ENCODE measurements at regions of chr3 and their contacts with region 1.

Region 1: GRCh38 chr3:69324362-69325025 is 61.4 kb downstream of the FRMD4B start:
- DNase-seq: no peak
- H3K4me3 Mint-ChIP-seq: no peak overlapping the region
- H3K27ac Mint-ChIP-seq: peak overlapping the region; percentile 85
- H3K4me1 Mint-ChIP-seq: peaks cover 56% of the 10 kb centered on the region
- H3K27me3 Mint-ChIP-seq: peaks cover 1% of the 10 kb centered on the region

Region 2: GRCh38 chr3:67349551-67350174 is 1974.8 kb before region 1 on chr3:
- intact Hi-C with region 1: loop called (anchors 2 kb)
- DNase-seq: no peak
- H3K4me3 Mint-ChIP-seq: no peak overlapping the region
- H3K27ac Mint-ChIP-seq: peak overlapping the region; percentile 3
- H3K4me1 Mint-ChIP-seq: peaks cover 14% of the 10 kb centered on the region
- H3K27me3 Mint-ChIP-seq: peaks cover 3% of the 10 kb centered on the region

Region 3: DNA sequence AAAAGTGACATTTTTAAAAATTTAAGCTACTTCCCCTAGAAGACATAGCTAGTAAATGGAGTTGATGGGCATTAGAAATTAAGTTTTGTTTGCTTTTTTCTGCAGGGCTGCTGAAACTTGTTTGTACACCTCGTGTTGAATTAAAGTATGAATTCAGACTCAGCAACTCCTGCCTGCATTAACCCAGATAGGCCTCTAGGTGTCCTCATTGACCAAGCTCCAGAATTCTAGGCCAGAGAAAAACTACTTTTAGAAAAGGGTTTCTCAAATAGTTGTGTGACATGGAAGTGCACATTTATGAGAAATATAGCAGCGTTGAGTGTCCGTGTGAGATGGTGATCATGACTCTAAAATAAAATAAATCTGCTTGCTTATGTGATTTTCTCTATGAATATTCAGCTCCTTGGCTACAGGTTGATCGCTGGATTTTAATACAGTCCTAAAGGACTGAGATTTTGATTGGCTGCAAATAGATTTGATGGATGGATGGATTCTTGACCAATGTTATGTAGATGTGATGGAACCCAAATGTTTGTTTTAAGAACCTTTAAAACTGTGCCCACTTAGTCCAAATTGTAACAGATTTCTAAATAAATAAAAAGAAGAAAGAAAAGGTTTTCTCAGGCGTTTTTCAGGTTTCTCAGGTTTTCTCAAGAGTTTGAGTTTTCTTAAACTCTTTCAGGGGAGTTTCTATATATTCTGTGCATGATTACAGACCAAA is 162.7 kb before region 1 on chr3:
- intact Hi-C with region 1: loop called (anchors 1 kb)
- DNase-seq: peak; percentile 34
- H3K4me3 Mint-ChIP-seq: no peak overlapping the region
- H3K27ac Mint-ChIP-seq: peak overlapping the region; percentile 6
- H3K4me1 Mint-ChIP-seq: peaks cover 8% of the 10 kb centered on the region
- H3K27me3 Mint-ChIP-seq: peaks cover 2% of the 10 kb centered on the region

Region 4: GRCh38 chr3:69306239-69307185 is 18.0 kb before region 1 on chr3:
- intact Hi-C with region 1: loop called (anchors 1 kb)
- DNase-seq: peak; percentile 60
- H3K4me3 Mint-ChIP-seq: peak overlapping the region; percentile 55
- H3K27ac Mint-ChIP-seq: peak overlapping the region; percentile 58
- H3K4me1 Mint-ChIP-seq: peaks cover 30% of the 10 kb centered on the region
- H3K27me3 Mint-ChIP-seq: no peaks in the 10 kb centered on the region

Region 5: GRCh38 chr3:69410250-69410649 is 85.8 kb after region 1 on chr3:
- intact Hi-C with region 1: loop called (anchors 1 kb)
- DNase-seq: peak; percentile 57
- H3K4me3 Mint-ChIP-seq: no peak overlapping the region
- H3K27ac Mint-ChIP-seq: no peak overlapping the region
- H3K4me1 Mint-ChIP-seq: peaks cover 11% of the 10 kb centered on the region
- H3K27me3 Mint-ChIP-seq: peaks cover 9% of the 10 kb centered on the region

Region 6: DNA sequence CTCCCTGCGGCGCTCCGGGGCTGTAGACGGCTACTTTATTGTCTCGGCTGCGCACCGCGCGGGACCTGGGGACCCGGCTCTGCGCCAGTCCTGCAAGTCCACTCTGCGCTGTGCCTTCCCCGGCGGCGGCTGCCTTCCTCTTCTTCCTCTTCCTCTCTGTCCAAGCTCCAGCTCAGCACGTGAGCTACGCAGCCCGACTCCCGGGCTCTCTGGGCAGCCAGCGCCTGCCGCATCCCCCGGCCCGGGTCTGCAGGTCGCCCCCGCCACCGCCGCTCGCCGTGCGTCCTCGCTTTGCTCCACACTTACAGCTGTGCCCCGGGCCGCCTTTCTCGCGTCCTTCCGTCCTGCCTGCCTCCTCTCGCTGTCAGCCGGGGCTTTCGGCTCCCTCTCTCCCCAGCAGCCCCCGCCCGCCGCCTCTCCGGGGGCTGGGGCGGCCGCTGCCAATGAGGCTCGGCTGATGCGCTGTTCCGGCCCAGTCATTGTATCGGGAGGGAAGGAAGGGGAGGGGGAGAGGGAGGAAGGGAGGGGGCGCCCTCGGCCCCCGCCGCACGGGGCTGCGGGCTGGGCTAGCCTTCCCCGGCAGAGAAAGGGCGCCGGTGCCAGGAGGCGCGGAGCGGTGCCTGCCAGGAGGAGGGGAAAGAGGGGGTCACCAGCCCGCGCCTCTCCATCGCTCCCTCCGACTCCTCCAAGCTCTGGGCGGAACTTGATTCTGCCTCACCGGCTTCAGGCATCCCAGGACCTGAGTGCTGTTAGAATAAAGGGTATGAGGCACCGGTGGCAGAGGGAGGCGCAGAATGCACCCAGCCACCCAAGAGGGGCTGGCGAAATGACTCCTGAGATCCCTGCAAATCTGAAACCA is 218.0 kb after region 1 on chr3:
- intact Hi-C with region 1: loop called (anchors 5 kb)
- DNase-seq: no peak
- H3K4me3 Mint-ChIP-seq: no peak overlapping the region
- H3K27ac Mint-ChIP-seq: no peak overlapping the region
- H3K4me1 Mint-ChIP-seq: no peaks in the 10 kb centered on the region
- H3K27me3 Mint-ChIP-seq: peaks cover 45% of the 10 kb centered on the region

Region 7: DNA sequence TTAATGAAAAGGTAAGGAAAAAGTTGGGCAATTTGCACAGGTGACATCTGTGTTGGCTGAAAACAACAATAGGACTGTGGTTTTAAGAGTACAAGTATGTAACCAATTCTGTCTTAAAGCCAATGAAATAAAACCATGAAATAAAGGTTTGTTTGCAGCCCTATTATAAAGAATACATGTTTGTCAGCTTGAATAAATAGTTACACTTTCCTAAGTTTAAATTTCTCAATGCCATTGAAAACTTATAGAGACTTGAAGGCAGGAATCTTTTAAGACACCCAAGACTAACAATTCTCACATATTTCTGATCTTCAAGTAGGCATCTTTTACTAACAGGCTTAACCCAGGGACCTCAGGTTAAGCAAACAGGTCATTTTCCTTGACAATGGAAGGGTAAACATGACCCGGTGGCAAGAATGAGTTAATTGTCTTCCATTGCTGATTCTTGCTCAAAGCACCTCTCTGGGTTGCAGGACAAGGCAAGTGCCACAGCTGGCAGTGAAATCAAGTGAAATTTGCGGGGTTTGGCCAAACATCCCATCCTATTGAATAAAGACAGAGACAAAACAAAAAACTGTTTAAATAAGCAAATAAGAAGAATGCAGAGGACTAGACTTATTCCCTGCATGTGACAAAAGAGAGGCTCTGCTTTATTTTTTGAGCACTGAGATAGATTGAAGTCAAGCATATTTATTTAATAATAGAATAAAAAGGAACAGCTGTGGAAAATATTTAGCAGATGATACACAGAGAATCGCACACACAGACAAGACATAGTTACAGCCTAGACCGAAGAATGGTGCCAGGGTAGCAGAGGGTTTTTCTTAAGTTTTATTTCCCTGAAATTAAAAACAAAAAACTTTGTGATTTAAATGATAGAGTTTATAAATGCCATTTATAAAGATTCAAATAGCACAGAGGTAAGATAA is 358.6 kb after region 1 on chr3:
- intact Hi-C with region 1: no loop called
- DNase-seq: no peak
- H3K4me3 Mint-ChIP-seq: no peak overlapping the region
- H3K27ac Mint-ChIP-seq: no peak overlapping the region
- H3K4me1 Mint-ChIP-seq: no peaks in the 10 kb centered on the region
- H3K27me3 Mint-ChIP-seq: peaks cover 3% of the 10 kb centered on the region

Measured in activated T-helper 1 cell treated with anti-CD3 and anti-CD28 coated beads, Interleukin-12 subunit alpha, Interleukin-12 subunit beta, Interleukin-2, Interleukin-4 antibody, amounts not matched to agents 30 ng/mL and 10 ng/mL and 1 ng/mL, durations not matched to agents 14 hours and 24 hours and 36 hours (primary cell).